ENCODE measurements at regions of chr16 and their contacts with region 1.

Region 1: GRCh38 chr16:53435066-53435688 is 906 bp downstream of the RBL2 start:
- DNase-seq: peak; percentile 84
- ATAC-seq: peak; percentile 75
- H3K4me3 ChIP-seq: peak overlapping the region; percentile 76 to 99 (median 98)
- H3K4me3 Mint-ChIP-seq: peak overlapping the region; percentile 93
- H3K27ac ChIP-seq: peak overlapping the region; percentile 83 to 90
- H3K27ac Mint-ChIP-seq: peak overlapping the region; percentile 95
- H3K4me1 ChIP-seq: peaks cover 15 to 16% of the 10 kb centered on the region in 2 donors
- H3K4me1 Mint-ChIP-seq: peaks cover 27% of the 10 kb centered on the region
- H3K27me3 ChIP-seq: peaks cover 0 to under 1% (median 0%) of the 10 kb centered on the region in 4 experiments
- H3K27me3 Mint-ChIP-seq: peaks cover 2% of the 10 kb centered on the region
- CTCF ChIP-seq: no peak

Region 2: GRCh38 chr16:53220585-53220984 is 214.6 kb before region 1 on chr16:
- CTCF ChIA-PET with region 1: no interaction called
- POLR2A ChIA-PET with region 1: no interaction called
- intact Hi-C with region 1: loop called (anchors 10 kb)
- DNase-seq: peak; percentile 50
- ATAC-seq: peak; percentile 60
- H3K4me3 ChIP-seq: no peak overlapping the region
- H3K4me3 Mint-ChIP-seq: no peak overlapping the region
- H3K27ac ChIP-seq: peak overlapping the region; percentile 31 to 78
- H3K27ac Mint-ChIP-seq: no peak overlapping the region
- H3K4me1 ChIP-seq: peaks cover 33 to 35% of the 10 kb centered on the region in 2 donors
- H3K4me1 Mint-ChIP-seq: peaks cover 12% of the 10 kb centered on the region
- H3K27me3 ChIP-seq: no peaks in the 10 kb centered on the region
- H3K27me3 Mint-ChIP-seq: no peaks in the 10 kb centered on the region
- CTCF ChIP-seq: peak; percentile 48

Region 3: DNA sequence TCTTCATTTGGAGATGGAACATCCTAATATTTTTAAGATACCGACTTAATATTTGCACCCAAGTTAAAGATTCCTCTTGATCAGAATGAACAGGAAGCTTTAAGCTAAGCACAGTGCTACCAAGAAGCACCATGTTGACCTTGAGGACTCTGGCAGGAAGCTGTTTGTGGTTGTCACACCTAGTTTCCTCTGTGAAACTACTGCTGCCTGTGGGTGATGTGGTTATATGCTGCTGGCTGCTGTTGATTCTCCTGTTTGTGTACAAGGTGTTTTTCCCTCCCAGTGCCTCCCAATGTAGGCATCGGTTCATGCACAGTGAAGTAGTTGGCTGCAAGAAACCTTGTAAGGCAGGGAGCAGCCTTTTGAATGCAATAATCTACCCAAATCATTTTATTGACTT is 22.5 kb after region 1 on chr16:
- CTCF ChIA-PET with region 1: interaction called, 4 read pairs
- POLR2A ChIA-PET with region 1: interaction called, 3 read pairs
- intact Hi-C with region 1: loop called (anchors 2 kb)
- DNase-seq: peak; percentile 77
- ATAC-seq: peak; percentile 96
- H3K4me3 ChIP-seq: no peak overlapping the region
- H3K4me3 Mint-ChIP-seq: peak overlapping the region; percentile 10
- H3K27ac ChIP-seq: no peak overlapping the region
- H3K27ac Mint-ChIP-seq: peak overlapping the region; percentile 12
- H3K4me1 ChIP-seq: peaks cover 23 to 26% of the 10 kb centered on the region in 2 donors
- H3K4me1 Mint-ChIP-seq: peaks cover 30% of the 10 kb centered on the region
- H3K27me3 ChIP-seq: no peaks in the 10 kb centered on the region
- H3K27me3 Mint-ChIP-seq: no peaks in the 10 kb centered on the region
- CTCF ChIP-seq: no peak

Region 4: DNA sequence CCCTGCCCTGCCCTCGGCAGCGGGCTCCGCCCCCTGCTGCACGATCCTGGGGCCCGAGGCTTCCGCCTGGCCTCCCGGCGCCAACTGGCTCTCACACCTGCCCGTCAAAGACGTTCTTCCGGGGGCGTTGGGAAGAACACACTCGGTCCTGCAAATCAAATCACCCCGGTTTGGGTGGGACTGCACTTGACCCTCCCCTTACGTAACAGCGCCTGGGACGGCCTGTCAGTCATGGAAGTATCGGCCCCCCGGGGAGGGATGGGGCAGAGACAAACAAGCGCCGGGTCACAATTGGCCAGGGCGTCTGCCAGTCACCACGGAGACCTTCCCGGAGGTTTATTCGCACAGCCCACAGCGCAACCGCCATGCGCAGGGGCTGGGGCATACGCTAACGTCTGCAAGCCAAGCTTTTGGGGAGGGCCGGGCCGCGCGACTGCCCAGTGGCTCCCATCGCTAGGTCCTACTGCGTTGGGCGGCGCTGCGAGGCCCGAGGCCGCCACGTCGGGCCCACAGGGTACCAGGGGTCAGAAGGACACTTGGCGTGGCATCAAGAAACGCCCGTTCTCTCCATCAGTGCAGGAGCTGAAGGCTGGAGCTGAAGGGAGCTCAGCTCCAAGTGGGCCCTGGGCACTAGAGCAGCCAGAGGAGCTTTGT is 68.2 kb after region 1 on chr16:
- CTCF ChIA-PET with region 1: interaction called, 5 read pairs
- POLR2A ChIA-PET with region 1: interaction called, 14 read pairs
- intact Hi-C with region 1: loop called (anchors 1 kb)
- DNase-seq: peak; percentile 100
- ATAC-seq: peak; percentile 91
- H3K4me3 ChIP-seq: peak overlapping the region; percentile 52 to 90 (median 86)
- H3K4me3 Mint-ChIP-seq: peak overlapping the region; percentile 87
- H3K27ac ChIP-seq: peak overlapping the region; percentile 82 to 83
- H3K27ac Mint-ChIP-seq: peak overlapping the region; percentile 83
- H3K4me1 ChIP-seq: peaks cover 18 to 21% of the 10 kb centered on the region in 2 donors
- H3K4me1 Mint-ChIP-seq: peaks cover 31% of the 10 kb centered on the region
- H3K27me3 ChIP-seq: no peaks in the 10 kb centered on the region
- H3K27me3 Mint-ChIP-seq: no peaks in the 10 kb centered on the region
- CTCF ChIP-seq: no peak

Region 5: GRCh38 chr16:53518550-53519416 is 83.6 kb after region 1 on chr16:
- CTCF ChIA-PET with region 1: no interaction called
- POLR2A ChIA-PET with region 1: no interaction called
- intact Hi-C with region 1: loop called (anchors 5 kb)
- DNase-seq: peak; percentile 84
- ATAC-seq: peak; percentile 89
- H3K4me3 ChIP-seq: peak overlapping the region; percentile 19 to 57 (median 24)
- H3K4me3 Mint-ChIP-seq: peak overlapping the region; percentile 83
- H3K27ac ChIP-seq: peak overlapping the region; percentile 79 to 87
- H3K27ac Mint-ChIP-seq: peak overlapping the region; percentile 88
- H3K4me1 ChIP-seq: peaks cover 42 to 44% of the 10 kb centered on the region in 2 donors
- H3K4me1 Mint-ChIP-seq: peaks cover 46% of the 10 kb centered on the region
- H3K27me3 ChIP-seq: no peaks in the 10 kb centered on the region
- H3K27me3 Mint-ChIP-seq: no peaks in the 10 kb centered on the region
- CTCF ChIP-seq: no peak

Region 6: GRCh38 chr16:53703590-53704444 is 268.6 kb after region 1 on chr16 and contains the starts of genes FTO and RPGRIP1L:
- CTCF ChIA-PET with region 1: no interaction called
- POLR2A ChIA-PET with region 1: no interaction called
- intact Hi-C with region 1: loop called (anchors 1 kb)
- DNase-seq: peak; percentile 97
- ATAC-seq: peak; percentile 96
- H3K4me3 ChIP-seq: peak within 1 kb of the TSS; percentile 60 to 87 (median 75)
- H3K4me3 Mint-ChIP-seq: peak within 1 kb of the TSS; percentile 99
- H3K27ac ChIP-seq: peak within 1 kb of the TSS; percentile 42 to 75
- H3K27ac Mint-ChIP-seq: peak within 1 kb of the TSS; percentile 90
- H3K4me1 ChIP-seq: peaks cover 15 to 17% of the 10 kb centered on the region in 2 donors
- H3K4me1 Mint-ChIP-seq: peaks cover 33% of the 10 kb centered on the region
- H3K27me3 ChIP-seq: no peaks in the 10 kb centered on the region
- H3K27me3 Mint-ChIP-seq: no peaks in the 10 kb centered on the region
- CTCF ChIP-seq: no peak
- total RNA-seq, gene FTO: 68.5 and 71.3 TPM in 2 replicates
- total RNA-seq, gene RPGRIP1L: 7.0 and 7.1 TPM in 2 replicates

Measured in B cell (primary cell).